Activated CD4-positive, alpha-beta T cell treated with anti-CD3 and anti-CD28 coated beads for 36 hours (primary cell): ENCODE measurements at regions of chr13 and their contacts with region 1.

Region 1: GRCh38 chr13:80132741-80133601 is 208.0 kb downstream of the SPRY2 start:
- DNase-seq: no peak
- ATAC-seq: no peak
- H3K4me3 Mint-ChIP-seq: no peak overlapping the region
- H3K27ac Mint-ChIP-seq: no peak overlapping the region
- H3K4me1 Mint-ChIP-seq: no peaks in the 10 kb centered on the region
- H3K27me3 Mint-ChIP-seq: peaks cover 2% of the 10 kb centered on the region

Region 2: GRCh38 chr13:80100636-80101035 is 32.3 kb before region 1 on chr13:
- CTCF ChIA-PET with region 1: no interaction called
- POLR2A ChIA-PET with region 1: no interaction called
- intact Hi-C with region 1: loop called in 1 of 2 experiments (anchors 2 kb)
- DNase-seq: no peak
- ATAC-seq: no peak
- H3K4me3 Mint-ChIP-seq: no peak overlapping the region
- H3K27ac Mint-ChIP-seq: no peak overlapping the region
- H3K4me1 Mint-ChIP-seq: no peaks in the 10 kb centered on the region
- H3K27me3 Mint-ChIP-seq: no peaks in the 10 kb centered on the region

Region 3: DNA sequence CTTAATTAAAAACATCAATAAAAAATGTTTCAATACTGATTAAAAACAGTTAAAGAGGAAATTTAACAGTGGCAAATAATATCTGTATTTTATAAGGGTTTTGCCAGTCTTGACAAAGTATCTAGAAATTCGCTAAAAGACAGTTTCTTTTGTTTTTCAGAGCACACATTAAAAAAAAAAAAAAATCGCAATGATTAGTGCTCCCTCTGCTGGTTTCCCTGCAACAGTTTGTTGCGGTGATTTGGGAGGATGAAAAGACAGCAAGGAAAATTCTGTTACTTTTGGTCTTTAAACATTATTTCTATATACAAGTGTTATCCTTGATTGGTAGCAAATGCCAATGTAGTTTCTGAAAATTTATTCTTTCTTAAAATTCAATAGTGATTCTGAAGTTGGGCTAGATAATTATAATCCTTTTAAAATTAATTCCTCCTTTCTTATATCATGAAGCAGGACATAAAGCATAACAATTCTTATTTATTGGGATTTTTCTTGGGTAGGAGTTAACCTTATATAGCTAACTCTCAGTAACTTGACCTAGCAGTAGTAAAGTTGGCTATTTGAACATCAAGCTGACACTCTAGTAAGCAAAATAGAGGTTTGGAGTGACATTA is 231.0 kb after region 1 on chr13:
- CTCF ChIA-PET with region 1: no interaction called
- POLR2A ChIA-PET with region 1: no interaction called
- intact Hi-C with region 1: no loop called
- DNase-seq: no peak
- ATAC-seq: no peak
- H3K4me3 Mint-ChIP-seq: no peak overlapping the region
- H3K27ac Mint-ChIP-seq: no peak overlapping the region
- H3K4me1 Mint-ChIP-seq: no peaks in the 10 kb centered on the region
- H3K27me3 Mint-ChIP-seq: peaks cover 2% of the 10 kb centered on the region